Activated T-helper 1 cell treated with anti-CD3 and anti-CD28 coated beads, Interleukin-12 subunit alpha, Interleukin-12 subunit beta, Interleukin-2, Interleukin-4 antibody, amounts not matched to agents 30 ng/mL and 10 ng/mL and 1 ng/mL, durations not matched to agents 14 hours and 24 hours and 36 hours (primary cell): ENCODE measurements at regions of chr13 and their contacts with region 1.

Region 1: DNA sequence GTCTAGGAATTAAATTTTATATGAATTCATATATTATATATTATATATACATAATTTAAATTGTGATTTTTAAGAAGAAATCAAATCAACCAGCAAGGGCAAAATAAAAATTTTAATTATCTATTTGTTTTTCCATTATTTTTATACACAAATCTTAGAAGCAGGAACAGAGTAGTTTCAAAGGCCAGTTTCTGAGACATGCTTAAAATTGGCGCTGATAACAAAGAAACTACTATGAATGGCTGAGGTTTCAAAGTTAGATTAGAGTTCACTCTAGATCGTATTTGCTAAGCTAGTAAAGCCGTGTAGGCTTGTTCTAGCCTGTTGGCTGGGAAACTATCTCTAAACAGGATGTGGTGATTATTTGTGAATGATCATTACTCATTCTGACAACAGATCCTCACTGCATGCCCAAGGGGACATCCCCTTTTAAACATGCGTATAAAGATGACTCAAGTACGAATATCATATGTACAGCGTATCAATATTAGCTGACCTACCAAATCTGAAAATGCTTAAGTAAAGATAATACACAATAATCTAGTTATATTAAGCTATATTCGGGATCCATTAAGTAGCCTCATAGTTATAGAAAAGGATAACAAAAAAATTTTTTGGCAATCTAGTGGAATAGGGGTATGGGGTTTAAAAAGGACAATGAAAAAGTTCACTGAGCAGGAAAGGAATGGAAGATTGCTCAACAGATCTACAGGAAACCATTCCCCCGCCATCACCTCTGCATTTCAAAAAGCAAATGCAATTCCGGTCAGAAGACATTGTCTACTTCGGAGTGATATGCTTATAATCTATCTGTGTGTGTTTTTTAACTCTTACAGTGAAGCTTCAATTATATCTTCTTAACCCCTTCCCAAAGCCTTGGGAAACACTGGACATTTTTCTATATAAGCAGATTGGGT is 150.1 kb downstream of the SHISA2 start:
- DNase-seq: peak; percentile 60
- H3K4me3 Mint-ChIP-seq: peak overlapping the region; percentile 15
- H3K27ac Mint-ChIP-seq: peak overlapping the region; percentile 61
- H3K4me1 Mint-ChIP-seq: peaks cover 23% of the 10 kb centered on the region
- H3K27me3 Mint-ChIP-seq: peaks cover 6% of the 10 kb centered on the region

Region 2: GRCh38 chr13:25352230-25352629 is 549.5 kb before region 1 on chr13:
- intact Hi-C with region 1: no loop called
- DNase-seq: no peak
- H3K4me3 Mint-ChIP-seq: no peak overlapping the region
- H3K27ac Mint-ChIP-seq: no peak overlapping the region
- H3K4me1 Mint-ChIP-seq: no peaks in the 10 kb centered on the region
- H3K27me3 Mint-ChIP-seq: peaks cover 9% of the 10 kb centered on the region

Region 3: DNA sequence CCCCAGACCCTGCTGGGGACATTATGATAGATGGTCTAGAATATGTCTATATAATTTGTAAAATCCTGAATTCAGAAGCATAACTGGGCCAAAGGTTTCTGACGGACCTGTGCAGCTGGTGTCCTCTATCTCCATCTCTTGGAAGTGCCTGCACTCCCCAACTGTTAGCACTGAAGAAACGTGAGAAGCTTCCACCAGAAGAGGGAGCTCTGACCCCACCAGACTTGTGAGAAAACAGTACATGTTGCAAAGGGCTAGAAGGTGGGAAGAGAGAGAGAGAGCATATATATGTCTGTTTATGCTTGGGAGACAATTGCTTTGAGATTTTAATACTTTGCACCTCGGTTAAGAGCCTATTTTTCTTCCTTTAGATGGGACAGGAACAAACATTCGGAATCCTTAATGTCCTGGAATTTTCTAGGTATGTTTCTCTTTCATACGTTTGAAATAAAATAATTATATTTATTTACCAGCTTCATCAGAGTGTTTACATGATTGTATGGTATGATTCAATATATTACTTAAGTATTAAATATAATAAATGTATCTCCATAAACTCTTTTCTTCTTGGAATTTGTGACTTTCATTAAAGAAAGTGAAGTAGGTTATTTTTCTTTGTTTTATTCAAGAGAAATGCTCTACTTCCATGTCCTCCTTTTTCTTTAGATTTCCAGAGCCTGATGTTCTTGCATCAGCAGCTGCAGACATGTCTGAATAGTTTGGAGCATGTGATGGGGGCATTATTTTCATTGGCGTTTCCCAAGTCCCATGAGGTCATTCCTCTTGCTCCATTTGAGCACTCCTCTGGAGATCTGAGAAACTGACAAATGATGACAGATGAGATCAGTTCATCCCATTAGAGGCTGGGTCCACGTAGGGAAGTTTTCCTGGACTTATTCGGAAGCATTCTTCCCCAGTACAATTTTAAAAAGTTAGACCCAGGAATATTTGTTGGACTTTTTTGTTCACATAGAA is 327.0 kb before region 1 on chr13:
- intact Hi-C with region 1: loop called (anchors 10 kb)
- DNase-seq: peak; percentile 68
- H3K4me3 Mint-ChIP-seq: no peak overlapping the region
- H3K27ac Mint-ChIP-seq: no peak overlapping the region
- H3K4me1 Mint-ChIP-seq: peaks cover 15% of the 10 kb centered on the region
- H3K27me3 Mint-ChIP-seq: peaks cover 22% of the 10 kb centered on the region

Region 4: DNA sequence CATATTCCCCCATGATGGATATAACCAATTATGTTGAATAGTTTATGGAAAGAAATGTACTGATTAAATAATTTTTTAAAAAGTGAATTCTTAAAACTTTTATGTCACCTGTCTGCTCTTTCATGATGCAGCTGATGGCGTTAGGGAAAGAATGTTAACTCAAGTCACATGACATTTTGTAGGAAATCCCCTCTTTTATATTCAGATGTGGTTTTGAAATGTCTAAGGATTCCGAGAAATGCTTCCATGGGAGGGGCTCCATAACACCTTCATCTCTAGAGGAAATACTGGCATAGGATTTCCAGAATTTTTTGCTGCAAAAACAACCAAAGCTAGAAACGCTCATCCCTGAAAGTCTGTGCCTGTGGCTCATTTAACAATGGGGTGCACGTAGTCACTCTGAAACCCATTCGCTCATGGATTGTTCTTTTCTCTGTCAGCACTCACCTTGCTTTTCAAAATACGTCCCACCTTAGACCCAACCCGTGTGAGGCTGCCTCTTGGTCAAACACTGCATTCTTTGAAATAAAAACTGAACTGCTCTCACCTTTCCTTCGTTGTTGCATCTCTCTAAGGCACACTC is 138.8 kb before region 1 on chr13:
- intact Hi-C with region 1: loop called (anchors 1 kb)
- DNase-seq: peak; percentile 19
- H3K4me3 Mint-ChIP-seq: peak overlapping the region; percentile 55
- H3K27ac Mint-ChIP-seq: peak overlapping the region; percentile 93
- H3K4me1 Mint-ChIP-seq: peaks cover 51% of the 10 kb centered on the region
- H3K27me3 Mint-ChIP-seq: no peaks in the 10 kb centered on the region

Region 5: DNA sequence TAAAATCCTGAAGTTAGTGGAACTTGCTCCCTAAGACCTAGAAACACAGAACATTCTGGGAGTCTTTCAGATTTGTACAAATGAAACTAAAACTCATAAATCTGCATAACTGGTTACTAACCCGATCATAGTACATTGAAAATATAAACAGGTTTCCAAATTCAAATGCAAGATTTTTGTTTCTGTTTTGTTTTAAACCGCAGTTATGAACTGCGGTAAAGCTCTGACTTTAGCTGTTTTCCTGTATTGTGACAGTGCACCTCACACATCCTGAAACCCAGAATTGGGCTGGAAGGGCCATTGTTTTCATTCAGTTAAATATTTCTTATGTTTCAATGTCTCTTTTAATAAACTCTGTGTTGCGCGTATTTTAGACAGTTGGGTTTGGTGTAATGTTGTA is 54.6 kb before region 1 on chr13:
- intact Hi-C with region 1: loop called (anchors 1 kb)
- DNase-seq: peak; percentile 12
- H3K4me3 Mint-ChIP-seq: peak overlapping the region; percentile 54
- H3K27ac Mint-ChIP-seq: peak overlapping the region; percentile 79
- H3K4me1 Mint-ChIP-seq: peaks cover 62% of the 10 kb centered on the region
- H3K27me3 Mint-ChIP-seq: peaks cover 5% of the 10 kb centered on the region

Region 6: GRCh38 chr13:25886438-25887214 is 15.1 kb before region 1 on chr13:
- intact Hi-C with region 1: loop called (anchors 1 kb)
- DNase-seq: peak; percentile 14
- H3K4me3 Mint-ChIP-seq: no peak overlapping the region
- H3K27ac Mint-ChIP-seq: peak overlapping the region; percentile 75
- H3K4me1 Mint-ChIP-seq: peaks cover 71% of the 10 kb centered on the region
- H3K27me3 Mint-ChIP-seq: peaks cover 5% of the 10 kb centered on the region

Region 7: DNA sequence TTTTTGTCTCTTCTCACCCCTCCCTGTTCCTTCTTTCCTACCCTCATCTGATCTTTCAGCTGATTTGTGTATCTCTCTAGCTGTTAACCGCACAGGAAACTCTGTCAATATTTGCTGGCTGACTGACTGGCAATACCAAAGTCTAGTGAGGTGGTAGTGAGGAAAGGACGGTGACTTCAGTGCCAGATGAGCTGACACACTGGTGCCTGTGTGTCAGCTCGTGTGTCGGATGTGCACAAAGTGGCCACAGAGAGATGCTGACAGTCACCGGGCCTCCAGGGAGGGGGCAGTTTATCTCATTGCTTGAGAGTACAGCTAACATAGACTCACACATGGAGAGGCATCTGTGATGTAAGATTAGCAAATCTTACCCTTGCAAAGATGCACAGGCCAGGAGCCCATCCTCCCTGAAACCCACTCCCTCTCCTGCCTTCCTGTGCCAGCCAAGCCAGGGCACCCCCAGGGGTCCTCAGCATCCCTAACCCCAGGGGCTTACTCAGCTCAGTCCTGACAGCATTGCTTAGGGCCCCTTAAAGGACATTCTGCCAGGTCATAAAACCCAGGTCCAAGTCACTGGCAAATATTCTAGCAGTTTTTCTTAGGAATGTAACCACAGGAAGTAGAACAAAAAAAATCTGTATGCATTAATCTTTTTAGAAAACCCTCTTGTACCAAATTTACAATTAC is 69.9 kb after region 1 on chr13:
- intact Hi-C with region 1: loop called (anchors 2 kb)
- DNase-seq: peak; percentile 37
- H3K4me3 Mint-ChIP-seq: no peak overlapping the region
- H3K27ac Mint-ChIP-seq: peak overlapping the region; percentile 50
- H3K4me1 Mint-ChIP-seq: peaks cover 55% of the 10 kb centered on the region
- H3K27me3 Mint-ChIP-seq: no peaks in the 10 kb centered on the region

Region 8: DNA sequence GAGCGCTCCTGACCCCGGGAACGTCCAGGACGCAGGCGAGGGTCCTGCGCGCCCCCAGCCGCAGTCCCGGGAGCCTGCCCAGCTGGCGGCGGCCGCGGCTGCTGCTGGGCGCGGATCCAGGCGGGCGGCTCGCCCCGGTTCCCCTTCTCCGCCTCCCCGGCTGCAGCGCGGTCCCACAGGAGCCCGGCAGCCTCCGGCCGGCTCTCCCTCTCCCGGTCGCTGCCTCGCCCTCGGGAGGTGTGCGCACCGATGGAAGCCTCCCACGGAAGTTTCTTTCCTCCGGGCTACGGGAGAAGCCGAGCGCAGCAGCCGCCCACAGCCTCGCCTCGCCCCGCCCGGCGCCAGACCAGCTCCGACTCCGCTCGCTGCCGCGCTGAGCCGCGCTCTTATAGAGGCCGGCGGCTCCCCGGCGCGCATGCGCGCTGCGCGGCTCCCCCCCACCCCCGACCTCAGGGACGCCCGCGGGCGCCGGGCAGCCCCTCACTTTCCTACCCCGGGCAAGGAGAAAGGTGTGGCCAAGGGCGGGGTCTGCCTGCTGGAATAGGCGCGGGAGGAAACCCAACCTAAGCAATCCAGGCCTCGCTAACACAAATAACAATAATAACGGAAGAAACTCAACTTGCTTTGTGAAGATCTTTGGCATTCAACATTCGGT is 150.1 kb after region 1 on chr13 and contains the start of gene SHISA2:
- intact Hi-C with region 1: loop called (anchors 2 kb)
- DNase-seq: peak; percentile 15
- H3K4me3 Mint-ChIP-seq: peak within 1 kb of the TSS; percentile 81
- H3K27ac Mint-ChIP-seq: peak within 1 kb of the TSS; percentile 72
- H3K4me1 Mint-ChIP-seq: peaks cover 35% of the 10 kb centered on the region
- H3K27me3 Mint-ChIP-seq: peaks cover 49% of the 10 kb centered on the region
- total RNA-seq, gene SHISA2: 9.4 and 9.5 TPM in 2 replicates